Endothelial cell of umbilical vein (primary cell): ENCODE measurements at regions of chr20 and their contacts with region 1.

Region 1: GRCh38 chr20:52312132-52312729 is 120.7 kb upstream of the ZFP64 start:
- DNase-seq: peak; percentile 82
- H3K4me3 ChIP-seq: no peak overlapping the region
- H3K27ac ChIP-seq: no peak overlapping the region
- H3K4me1 ChIP-seq: no peaks in the 10 kb centered on the region
- H3K27me3 ChIP-seq: no peaks in the 10 kb centered on the region
- CTCF ChIP-seq: peak; percentile 61 to 63
- POLR2A ChIP-seq: no peak

Region 2: GRCh38 chr20:52083627-52084232 is 228.5 kb before region 1 on chr20:
- CTCF ChIA-PET with region 1: no interaction called
- POLR2A ChIA-PET with region 1: no interaction called
- dilution Hi-C with region 1: no loop called
- intact Hi-C with region 1: no loop called
- DNase-seq: peak; percentile 75
- H3K4me3 ChIP-seq: no peak overlapping the region
- H3K27ac ChIP-seq: no peak overlapping the region
- H3K4me1 ChIP-seq: no peaks in the 10 kb centered on the region
- H3K27me3 ChIP-seq: no peaks in the 10 kb centered on the region
- CTCF ChIP-seq: peak; percentile 51 to 56
- POLR2A ChIP-seq: no peak

Region 3: DNA sequence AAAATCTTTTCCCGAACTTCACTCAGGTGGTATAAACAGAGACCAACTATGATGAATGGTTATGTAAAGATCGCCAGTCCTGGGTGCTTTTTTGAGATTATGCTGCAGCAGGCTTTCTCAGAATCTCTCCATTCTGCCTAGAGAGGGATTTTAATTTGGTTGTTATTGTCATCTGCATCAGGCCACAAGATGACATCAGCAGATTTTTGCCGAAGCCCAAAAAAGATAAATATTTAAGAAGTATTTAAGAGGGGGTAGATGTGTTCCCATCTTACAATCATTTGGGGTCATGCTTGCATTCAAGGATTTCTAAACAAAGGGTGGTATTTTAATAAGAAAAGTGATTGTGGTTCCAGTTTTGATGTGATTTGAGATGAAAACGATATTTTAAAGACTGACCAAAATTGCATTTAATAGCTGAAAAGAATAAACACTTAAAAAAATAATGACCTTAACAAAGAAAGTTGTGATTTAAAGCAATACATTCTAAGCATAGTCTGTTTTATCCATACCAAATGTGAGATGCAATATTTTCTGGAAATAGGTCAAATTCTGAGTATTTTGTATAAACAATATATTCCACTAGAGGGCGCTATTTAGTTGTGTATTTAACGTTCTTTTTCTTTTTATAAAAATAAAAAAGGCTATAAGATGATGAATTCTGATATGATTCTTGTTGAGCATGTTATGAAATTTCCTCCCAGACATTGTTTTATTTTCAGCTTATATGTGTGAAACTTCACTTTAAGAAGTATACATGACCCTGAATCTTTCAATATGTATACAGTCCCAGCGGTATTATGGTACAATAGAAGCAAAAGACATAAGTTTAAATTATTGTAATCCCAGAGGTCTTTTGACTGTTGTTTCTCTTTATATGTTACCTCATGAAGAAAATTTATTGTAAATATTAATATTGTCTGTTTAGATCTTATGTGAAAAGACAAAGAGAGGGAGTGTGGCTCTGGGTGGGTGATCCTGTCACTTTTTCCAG is 69.7 kb before region 1 on chr20:
- CTCF ChIA-PET with region 1: no interaction called
- POLR2A ChIA-PET with region 1: no interaction called
- dilution Hi-C with region 1: no loop called
- intact Hi-C with region 1: loop called (anchors 2 kb)
- DNase-seq: peak; percentile 22
- H3K4me3 ChIP-seq: no peak overlapping the region
- H3K27ac ChIP-seq: no peak overlapping the region
- H3K4me1 ChIP-seq: no peaks in the 10 kb centered on the region
- H3K27me3 ChIP-seq: no peaks in the 10 kb centered on the region
- CTCF ChIP-seq: peak in 1 of 2 donors; percentile 19
- POLR2A ChIP-seq: no peak

Region 4: GRCh38 chr20:52295556-52295955 is 16.7 kb before region 1 on chr20:
- CTCF ChIA-PET with region 1: interaction called, 13 read pairs
- POLR2A ChIA-PET with region 1: no interaction called
- dilution Hi-C with region 1: no loop called
- intact Hi-C with region 1: no loop called
- DNase-seq: no peak
- H3K4me3 ChIP-seq: no peak overlapping the region
- H3K27ac ChIP-seq: no peak overlapping the region
- H3K4me1 ChIP-seq: peaks cover 10% of the 10 kb centered on the region
- H3K27me3 ChIP-seq: no peaks in the 10 kb centered on the region
- CTCF ChIP-seq: no peak
- POLR2A ChIP-seq: no peak

Region 5: GRCh38 chr20:53157443-53158408 is 845.5 kb after region 1 on chr20:
- CTCF ChIA-PET with region 1: no interaction called
- POLR2A ChIA-PET with region 1: no interaction called
- dilution Hi-C with region 1: no loop called
- intact Hi-C with region 1: loop called (anchors 1 kb)
- DNase-seq: peak; percentile 27
- H3K4me3 ChIP-seq: no peak overlapping the region
- H3K27ac ChIP-seq: no peak overlapping the region
- H3K4me1 ChIP-seq: no peaks in the 10 kb centered on the region
- H3K27me3 ChIP-seq: no peaks in the 10 kb centered on the region
- CTCF ChIP-seq: peak; percentile 47 to 64
- POLR2A ChIP-seq: no peak

Region 6: GRCh38 chr20:53547664-53548239 is 1235.5 kb after region 1 on chr20:
- CTCF ChIA-PET with region 1: interaction called, 173 read pairs
- POLR2A ChIA-PET with region 1: no interaction called
- dilution Hi-C with region 1: no loop called
- intact Hi-C with region 1: loop called (anchors 1 kb)
- DNase-seq: peak; percentile 68
- H3K4me3 ChIP-seq: no peak overlapping the region
- H3K27ac ChIP-seq: no peak overlapping the region
- H3K4me1 ChIP-seq: no peaks in the 10 kb centered on the region
- H3K27me3 ChIP-seq: no peaks in the 10 kb centered on the region
- CTCF ChIP-seq: peak; percentile 48 to 65
- POLR2A ChIP-seq: no peak

Region 7: GRCh38 chr20:54199721-54200176 is 1887.5 kb after region 1 on chr20:
- CTCF ChIA-PET with region 1: interaction called, 14 read pairs
- POLR2A ChIA-PET with region 1: no interaction called
- dilution Hi-C with region 1: no loop called
- intact Hi-C with region 1: no loop called
- DNase-seq: peak; percentile 77
- H3K4me3 ChIP-seq: no peak overlapping the region
- H3K27ac ChIP-seq: no peak overlapping the region
- H3K4me1 ChIP-seq: no peaks in the 10 kb centered on the region
- H3K27me3 ChIP-seq: no peaks in the 10 kb centered on the region
- CTCF ChIP-seq: peak; percentile 80 to 84
- POLR2A ChIP-seq: no peak